ENCODE measurements at regions of chr6 and their contacts with region 1.

Region 1: GRCh38 chr6:31680840-31681671 is at the start of gene LY6G5C:
- DNase-seq: peak; percentile 82 to 90 (median 85)
- ATAC-seq: peak; percentile 75 to 92 (median 88)
- H3K4me3 ChIP-seq: peak within 1 kb of the TSS; percentile 28 to 74 (median 58)
- H3K27ac ChIP-seq: peak within 1 kb of the TSS in 11 of 12 donors; percentile 9 to 83 (median 63)
- H3K4me1 ChIP-seq: peaks cover 0 to 26% (median 14%) of the 10 kb centered on the region in 12 donors
- H3K27me3 ChIP-seq: no peaks in the 10 kb centered on the region
- CTCF ChIP-seq: peak; percentile 54 to 85 (median 78)
- POLR2A ChIP-seq: no peak
- total RNA-seq, gene LY6G5C: 1.3 to 3.1 (median 2.2) TPM

Region 2: GRCh38 chr6:31739639-31740396 is 58.8 kb after region 1 on chr6 and contains the start of gene MSH5:
- intact Hi-C with region 1: loop called in 1 of 10 experiments (anchors 2 kb)
- DNase-seq: peak; percentile 97 to 99 (median 98)
- ATAC-seq: peak; percentile 93 to 98 (median 94)
- H3K4me3 ChIP-seq: peak within 1 kb of the TSS; percentile 40 to 89 (median 74)
- H3K27ac ChIP-seq: peak within 1 kb of the TSS in 10 of 12 donors; percentile 16 to 99 (median 62)
- H3K4me1 ChIP-seq: peaks cover 0 to 41% (median 34%) of the 10 kb centered on the region in 12 donors
- H3K27me3 ChIP-seq: no peaks in the 10 kb centered on the region
- CTCF ChIP-seq: no peak
- POLR2A ChIP-seq: peak in 1 of 2 donors; percentile 63
- total RNA-seq, gene MSH5: 0.44 to 8.4 (median 1.9) TPM

Region 3: DNA sequence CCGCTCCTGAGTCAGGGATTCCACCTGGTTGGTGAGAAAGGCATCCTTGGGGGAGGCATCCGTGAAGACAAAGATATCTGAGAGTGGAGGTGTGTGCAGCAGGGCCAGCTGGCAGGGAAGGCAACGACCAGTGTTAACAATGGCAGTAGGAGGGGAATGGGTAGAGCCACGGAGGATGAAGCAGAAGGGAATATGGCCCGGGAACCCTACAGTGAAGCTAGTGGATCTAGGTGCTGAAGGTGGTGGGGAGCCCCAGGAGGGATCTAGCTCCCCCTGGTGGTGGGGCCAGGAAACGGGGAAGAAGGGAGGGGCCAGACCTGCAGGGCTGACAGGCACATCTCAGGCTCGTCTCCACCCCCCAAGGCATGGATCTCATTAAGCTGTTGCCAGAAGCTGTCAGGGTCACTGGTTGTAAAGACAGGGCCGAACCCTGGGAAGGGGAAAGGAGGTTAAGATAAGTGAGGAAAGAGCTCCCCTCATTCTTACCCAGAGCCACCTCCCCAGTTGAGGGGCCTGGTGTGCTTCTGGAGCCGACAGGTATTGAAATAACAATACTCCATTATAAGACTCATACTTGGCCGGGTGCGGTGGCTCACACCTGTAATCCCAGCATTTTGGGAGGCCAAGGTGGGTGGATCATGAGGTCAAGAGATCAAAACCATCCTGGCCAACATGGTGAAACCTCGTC is 88.8 kb after region 1 on chr6:
- intact Hi-C with region 1: loop called in 5 of 10 experiments (anchors 2 to 10 kb)
- DNase-seq: peak; percentile 54 to 87 (median 67)
- ATAC-seq: peak in 3 of 4 donors; percentile 61 to 71 (median 67)
- H3K4me3 ChIP-seq: no peak overlapping the region
- H3K27ac ChIP-seq: no peak overlapping the region
- H3K4me1 ChIP-seq: peaks cover 0 to 41% (median 0%) of the 10 kb centered on the region in 12 donors
- H3K27me3 ChIP-seq: no peaks in the 10 kb centered on the region
- CTCF ChIP-seq: peak; percentile 56 to 86 (median 68)
- POLR2A ChIP-seq: no peak

Region 4: DNA sequence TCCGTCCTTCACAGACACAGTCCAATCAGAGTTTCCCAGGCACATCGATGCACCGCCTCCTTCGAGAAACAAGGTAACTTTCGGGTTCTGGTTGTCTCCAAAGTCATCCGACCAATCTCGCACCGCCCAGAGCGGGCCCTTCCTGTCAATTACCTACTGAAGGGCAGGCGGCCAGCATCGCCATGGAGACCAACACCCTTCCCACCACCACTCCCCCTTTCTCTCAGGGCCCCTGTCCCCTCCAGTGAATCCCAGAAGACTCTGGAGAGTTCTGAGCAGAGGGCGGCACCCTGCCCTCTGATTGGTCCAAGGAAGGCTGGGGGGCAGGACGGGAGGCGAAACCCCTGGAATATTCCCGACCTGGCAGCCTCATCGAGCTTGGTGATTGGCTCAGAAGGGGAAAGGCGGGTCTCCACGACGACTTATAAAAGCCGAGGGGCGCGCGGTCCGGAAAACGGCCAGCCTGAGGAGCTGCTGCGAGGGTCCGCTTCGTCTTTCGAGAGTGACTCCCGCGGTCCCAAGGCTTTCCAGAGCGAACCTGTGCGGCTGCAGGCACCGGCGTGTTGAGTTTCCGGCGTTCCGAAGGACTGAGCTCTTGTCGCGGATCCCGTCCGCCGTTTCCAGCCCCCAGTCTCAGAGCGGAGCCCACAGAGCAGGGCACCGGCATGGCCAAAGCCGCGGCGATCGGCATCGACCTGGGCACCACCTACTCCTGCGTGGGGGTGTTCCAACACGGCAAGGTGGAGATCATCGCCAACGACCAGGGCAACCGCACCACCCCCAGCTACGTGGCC is 146.4 kb after region 1 on chr6 and contains the start of gene HSPA1B:
- intact Hi-C with region 1: loop called (anchors 1 to 5 kb)
- DNase-seq: peak; percentile 98 to 100 (median 99)
- ATAC-seq: peak; percentile 94 to 97 (median 96)
- H3K4me3 ChIP-seq: peak within 1 kb of the TSS; percentile 41 to 82 (median 73)
- H3K27ac ChIP-seq: peak within 1 kb of the TSS; percentile 89 to 98 (median 96)
- H3K4me1 ChIP-seq: peaks cover 0 to 52% (median 30%) of the 10 kb centered on the region in 12 donors
- H3K27me3 ChIP-seq: no peaks in the 10 kb centered on the region
- CTCF ChIP-seq: no peak
- POLR2A ChIP-seq: peak; percentile 100
- total RNA-seq, gene HSPA1B: 120 to 306 (median 146) TPM

Region 5: DNA sequence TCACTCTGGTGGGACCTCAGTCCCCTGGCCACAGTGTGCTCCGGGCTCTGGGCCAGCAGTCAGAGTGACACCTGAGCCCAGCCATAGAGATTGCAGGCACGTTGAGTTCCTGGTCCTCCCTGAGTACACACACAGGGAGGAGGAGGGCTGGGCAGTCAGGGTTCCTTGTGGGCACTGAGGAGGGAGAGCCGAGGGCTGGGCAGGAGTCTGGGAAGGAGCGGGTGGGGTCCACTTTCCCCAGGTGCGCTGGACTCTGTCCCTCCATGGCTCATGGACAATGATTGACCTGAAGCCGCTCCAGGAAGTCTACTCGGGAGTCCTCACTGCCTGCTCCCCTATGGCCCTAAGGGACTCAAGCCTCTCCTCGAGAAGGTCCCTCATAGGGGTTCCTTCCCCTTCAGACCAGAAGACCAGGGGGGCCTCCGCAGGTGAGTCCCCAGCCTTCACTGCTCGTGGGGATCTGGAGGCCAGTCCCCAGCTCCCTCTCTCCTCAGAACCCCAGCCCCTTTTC is 196.7 kb after region 1 on chr6:
- intact Hi-C with region 1: loop called in 1 of 10 experiments (anchors 5 kb)
- DNase-seq: no peak
- ATAC-seq: peak in 3 of 4 donors; percentile 14 to 38 (median 37)
- H3K4me3 ChIP-seq: no peak overlapping the region
- H3K27ac ChIP-seq: no peak overlapping the region
- H3K4me1 ChIP-seq: no peaks in the 10 kb centered on the region
- H3K27me3 ChIP-seq: no peaks in the 10 kb centered on the region
- CTCF ChIP-seq: no peak
- POLR2A ChIP-seq: no peak

Region 6: DNA sequence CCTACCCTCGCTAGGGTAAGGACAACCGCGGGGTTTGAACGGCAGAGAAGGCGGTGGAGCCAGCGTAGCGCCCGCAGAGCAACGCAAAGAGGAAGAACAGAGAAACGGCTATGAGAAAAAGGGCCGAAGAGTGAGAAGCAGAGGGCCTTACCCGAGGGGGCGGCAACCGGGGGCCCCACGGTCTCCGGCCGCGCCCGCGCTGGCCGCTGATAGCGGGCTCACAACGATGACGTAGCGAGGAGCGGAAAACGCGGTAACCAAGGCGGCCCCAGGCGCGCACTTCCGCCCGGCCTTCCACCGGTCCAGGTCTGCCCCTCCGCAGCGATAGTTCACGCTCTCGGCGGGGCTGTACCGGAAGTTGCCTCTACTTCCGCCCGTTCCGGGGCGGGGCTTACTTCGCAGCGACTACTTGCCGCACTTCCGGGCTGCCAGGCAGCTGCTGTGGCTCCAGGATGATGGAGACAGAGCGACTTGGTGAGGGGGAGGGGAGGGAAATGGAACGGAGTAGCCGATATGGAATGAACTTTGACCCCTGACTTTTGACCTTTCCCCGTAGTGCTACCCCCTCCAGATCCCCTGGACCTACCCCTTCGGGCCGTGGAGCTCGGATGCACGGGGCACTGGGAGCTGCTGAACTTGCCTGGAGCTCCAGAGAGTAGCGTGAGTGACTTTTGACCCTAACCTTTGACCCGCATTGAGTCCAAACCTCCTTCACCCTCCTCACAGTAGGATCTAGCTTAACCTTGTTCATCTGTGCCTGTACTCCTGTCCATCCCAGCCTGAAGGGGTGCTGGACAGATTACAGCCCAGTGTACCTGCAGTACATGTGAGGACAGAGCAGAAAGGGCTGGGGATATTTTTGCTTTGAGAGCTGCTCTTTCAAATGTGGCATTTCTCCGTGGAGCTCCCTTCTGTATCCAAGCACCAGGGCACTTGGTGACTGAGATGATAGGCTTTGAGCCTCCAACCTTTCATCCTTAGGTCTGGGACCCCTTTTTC is 278.0 kb after region 1 on chr6 and contains the starts of genes NELFE and SKIC2:
- intact Hi-C with region 1: loop called in 7 of 10 experiments (anchors 5 to 10 kb)
- DNase-seq: peak; percentile 98 to 99 (median 99)
- ATAC-seq: peak; percentile 99 to 100 (median 99)
- H3K4me3 ChIP-seq: peak within 1 kb of the TSS; percentile 70 to 99 (median 87)
- H3K27ac ChIP-seq: peak within 1 kb of the TSS; percentile 35 to 95 (median 83)
- H3K4me1 ChIP-seq: peaks cover 0 to 23% (median 18%) of the 10 kb centered on the region in 12 donors
- H3K27me3 ChIP-seq: no peaks in the 10 kb centered on the region
- CTCF ChIP-seq: no peak
- POLR2A ChIP-seq: peak; percentile 18 to 67
- total RNA-seq, gene NELFE: 37.2 to 82.0 (median 46.4) TPM
- total RNA-seq, gene SKIC2: 24.5 to 51.8 (median 36.4) TPM

Region 7: GRCh38 chr6:32413427-32414047 is 732.5 kb after region 1 on chr6:
- intact Hi-C with region 1: no loop called
- DNase-seq: peak; percentile 77 to 91 (median 78)
- ATAC-seq: peak in 3 of 4 donors; percentile 69 to 89 (median 85)
- H3K4me3 ChIP-seq: no peak overlapping the region
- H3K27ac ChIP-seq: no peak overlapping the region
- H3K4me1 ChIP-seq: peaks cover 0 to 17% (median 0%) of the 10 kb centered on the region in 12 donors
- H3K27me3 ChIP-seq: peaks cover 0 to 65% (median 11%) of the 10 kb centered on the region in 9 donors
- CTCF ChIP-seq: peak; percentile 88 to 97 (median 94)
- POLR2A ChIP-seq: no peak

Measured in heart left ventricle (tissue), 16 donors.